Activated naive CD4-positive, alpha-beta T cell treated with anti-CD3 and anti-CD28 coated beads for 36 hours (primary cell): ENCODE measurements at regions of chr10 and their contacts with region 1.

Region 1: GRCh38 chr10:17257466-17258321 is 29.7 kb downstream of the VIM start:
- DNase-seq: peak; percentile 67
- H3K4me3 Mint-ChIP-seq: peak overlapping the region; percentile 3
- H3K27ac Mint-ChIP-seq: no peak overlapping the region
- H3K4me1 Mint-ChIP-seq: peaks cover 4% of the 10 kb centered on the region
- H3K27me3 Mint-ChIP-seq: no peaks in the 10 kb centered on the region

Region 2: DNA sequence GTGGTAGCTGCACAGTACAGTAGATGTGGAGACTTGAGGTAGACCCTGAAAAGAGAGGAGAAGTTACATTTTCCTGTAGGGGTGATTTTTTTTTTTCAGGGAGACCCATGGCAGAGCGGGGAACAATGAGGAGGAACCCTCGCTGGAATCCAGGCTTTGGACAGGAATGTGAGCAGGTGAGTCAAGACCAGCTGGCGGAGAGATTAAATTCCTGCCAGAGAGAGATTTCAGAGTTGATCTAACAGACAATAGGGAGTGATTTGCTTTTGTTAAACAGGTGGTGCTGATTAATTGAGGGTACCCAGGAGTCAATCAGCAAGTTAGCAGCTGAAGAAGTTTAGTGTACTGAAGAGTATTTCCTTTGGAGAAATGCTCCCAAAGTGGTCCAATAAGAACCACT is 1355.8 kb before region 1 on chr10:
- CTCF ChIA-PET with region 1: no interaction called
- intact Hi-C with region 1: loop called (anchors 5 kb)
- DNase-seq: no peak
- H3K4me3 Mint-ChIP-seq: no peak overlapping the region
- H3K27ac Mint-ChIP-seq: no peak overlapping the region
- H3K4me1 Mint-ChIP-seq: no peaks in the 10 kb centered on the region
- H3K27me3 Mint-ChIP-seq: peaks cover 2% of the 10 kb centered on the region

Region 3: DNA sequence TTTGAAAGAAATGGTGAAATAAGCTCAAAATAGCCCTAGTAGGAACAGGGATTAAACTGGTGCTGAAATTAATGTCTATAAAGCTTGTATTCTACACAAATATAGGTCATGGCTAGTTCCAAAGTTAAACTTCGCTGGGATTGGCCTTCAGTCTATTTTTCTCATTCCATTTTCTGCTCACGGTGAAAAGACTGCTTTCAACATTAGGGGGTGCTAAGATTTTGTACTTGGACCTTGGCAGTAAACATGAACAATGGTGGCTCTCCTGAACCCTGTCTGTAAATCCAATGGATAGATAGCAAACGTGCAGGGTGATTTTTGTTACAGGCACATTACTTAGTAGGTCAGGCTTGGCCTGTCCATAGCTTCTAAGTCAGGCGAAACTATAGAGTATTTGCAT is 404.5 kb before region 1 on chr10:
- CTCF ChIA-PET with region 1: interaction called, 14 read pairs
- intact Hi-C with region 1: loop called (anchors 1 kb)
- DNase-seq: no peak
- H3K4me3 Mint-ChIP-seq: no peak overlapping the region
- H3K27ac Mint-ChIP-seq: no peak overlapping the region
- H3K4me1 Mint-ChIP-seq: no peaks in the 10 kb centered on the region
- H3K27me3 Mint-ChIP-seq: no peaks in the 10 kb centered on the region